ENCODE measurements at regions of chr9 and their contacts with region 1.

Region 1: DNA sequence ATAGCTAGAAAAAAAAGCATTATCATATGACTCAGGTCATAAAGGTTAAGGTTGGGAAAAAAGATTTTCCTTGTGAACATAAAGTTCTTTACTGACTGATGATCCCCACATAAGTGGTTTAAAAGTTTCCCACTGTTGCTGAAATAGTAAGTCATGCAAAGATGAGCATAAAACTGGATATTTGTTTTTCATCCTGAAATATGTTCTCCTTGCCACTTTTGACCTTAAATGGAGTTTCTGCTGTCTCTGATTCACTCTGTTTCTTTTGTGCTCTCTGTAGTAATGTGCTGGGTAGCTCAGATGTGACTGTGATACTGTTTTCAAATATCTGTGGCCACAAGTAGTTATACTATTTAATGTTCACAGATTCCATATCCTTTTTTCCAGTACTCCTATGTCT is 162.5 kb upstream of the GAS1 start:
- DNase-seq: no peak
- ATAC-seq: no peak
- H3K4me3 ChIP-seq: no peak overlapping the region
- H3K27ac ChIP-seq: no peak overlapping the region
- H3K4me1 ChIP-seq: no peaks in the 10 kb centered on the region
- H3K27me3 ChIP-seq: peaks cover 0 to 3% of the 10 kb centered on the region in 2 experiments; a peak in 1 of 5 replicates
- CTCF ChIP-seq: no peak
- EP300 ChIP-seq: no peak
- POLR2A ChIP-seq: no peak
- RAD21 ChIP-seq: no peak

Region 2: GRCh38 chr9:86624630-86625029 is 485.2 kb before region 1 on chr9:
- CTCF ChIA-PET with region 1: no interaction called
- POLR2A ChIA-PET with region 1: no interaction called
- in situ Hi-C with region 1: no loop called
- intact Hi-C with region 1: loop called (anchors 5 kb)
- DNase-seq: no peak
- ATAC-seq: no peak
- H3K4me3 ChIP-seq: no peak overlapping the region
- H3K27ac ChIP-seq: no peak overlapping the region
- H3K4me1 ChIP-seq: no peaks in the 10 kb centered on the region
- H3K27me3 ChIP-seq: no peaks in the 10 kb centered on the region; a peak in 1 of 5 replicates
- CTCF ChIP-seq: no peak
- EP300 ChIP-seq: no peak
- POLR2A ChIP-seq: no peak
- RAD21 ChIP-seq: no peak